ENCODE measurements at regions of chr20 and their contacts with region 1.

Region 1: DNA sequence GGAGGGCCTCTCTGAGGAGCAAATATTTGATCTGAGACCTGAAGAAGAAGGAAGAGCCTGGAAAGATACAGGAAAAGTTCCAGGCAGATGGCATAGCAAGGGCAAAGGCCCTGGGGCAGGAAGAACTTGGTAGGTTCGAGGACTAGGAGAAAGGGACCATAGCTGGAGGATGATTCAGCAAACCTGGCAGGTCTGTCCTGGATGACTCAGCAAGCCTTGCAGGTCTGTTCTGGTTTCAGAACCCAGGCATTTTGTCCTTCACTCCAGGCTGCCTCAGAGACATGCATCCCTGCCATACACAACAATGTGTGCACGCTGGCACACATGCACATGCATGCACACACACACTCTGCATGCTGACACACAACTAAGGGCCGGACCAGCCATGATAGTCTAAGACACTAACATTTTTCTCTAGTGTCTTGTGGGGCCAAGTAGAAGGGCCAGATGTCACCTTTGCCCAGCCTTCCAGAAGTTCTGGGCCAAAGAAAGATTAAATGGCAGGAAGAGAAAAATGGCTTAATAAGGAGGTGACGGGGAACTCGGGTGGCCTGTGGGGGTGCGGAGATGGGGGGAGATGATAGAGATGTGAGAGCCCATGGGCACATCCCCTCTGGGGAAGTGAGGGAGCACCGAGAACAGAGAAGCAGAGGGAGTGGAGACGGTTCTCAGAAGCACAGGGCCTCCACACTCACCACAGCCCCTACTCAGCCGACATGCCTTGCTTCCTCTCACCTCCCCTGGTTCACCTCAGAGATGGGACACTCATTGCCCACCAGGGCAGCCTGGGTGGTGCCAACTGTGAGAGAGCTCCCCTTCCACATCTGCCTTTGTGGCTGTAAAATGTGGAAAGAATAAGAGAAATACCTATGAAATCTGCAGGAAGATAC is 15.4 kb upstream of the TRIB3 start:
- DNase-seq: no peak
- H3K4me3 Mint-ChIP-seq: no peak overlapping the region
- H3K27ac Mint-ChIP-seq: peak overlapping the region; percentile 71
- H3K4me1 Mint-ChIP-seq: peaks cover 46% of the 10 kb centered on the region
- H3K27me3 Mint-ChIP-seq: peaks cover 3% of the 10 kb centered on the region

Region 2: GRCh38 chr20:381581-382290 is 16.6 kb after region 1 on chr20:
- CTCF ChIA-PET with region 1: interaction called, 11 read pairs
- POLR2A ChIA-PET with region 1: interaction called, 7 read pairs
- DNase-seq: peak; percentile 88
- H3K4me3 Mint-ChIP-seq: peak overlapping the region; percentile 77
- H3K27ac Mint-ChIP-seq: peak overlapping the region; percentile 76
- H3K4me1 Mint-ChIP-seq: peaks cover 20% of the 10 kb centered on the region
- H3K27me3 Mint-ChIP-seq: no peaks in the 10 kb centered on the region

Region 3: GRCh38 chr20:840858-841567 is 475.9 kb after region 1 on chr20:
- CTCF ChIA-PET with region 1: no interaction called
- POLR2A ChIA-PET with region 1: no interaction called
- DNase-seq: no peak
- H3K4me3 Mint-ChIP-seq: peak overlapping the region; percentile 35
- H3K27ac Mint-ChIP-seq: no peak overlapping the region
- H3K4me1 Mint-ChIP-seq: peaks cover 57% of the 10 kb centered on the region
- H3K27me3 Mint-ChIP-seq: no peaks in the 10 kb centered on the region

Measured in activated CD4-positive, alpha-beta memory T cell treated with anti-CD3 and anti-CD28 coated beads, Interleukin-2, amount 10 ng/mL, durations not matched to agents 7 days and 5 days (primary cell).